Activated CD8-positive, alpha-beta memory T cell treated with anti-CD3 and anti-CD28 coated beads, Interleukin-2, amount 10 ng/mL, durations not matched to agents 7 days and 5 days (primary cell): ENCODE measurements at regions of chr12 and their contacts with region 1.

Region 1: GRCh38 chr12:122860346-122861090 is 25.3 kb downstream of the HIP1R start:
- DNase-seq: peak; percentile 87
- ATAC-seq: peak; percentile 74
- H3K4me3 Mint-ChIP-seq: no peak overlapping the region
- H3K27ac Mint-ChIP-seq: no peak overlapping the region
- H3K4me1 Mint-ChIP-seq: no peaks in the 10 kb centered on the region
- H3K27me3 Mint-ChIP-seq: no peaks in the 10 kb centered on the region

Region 2: GRCh38 chr12:122871851-122872780 is 11.6 kb after region 1 on chr12:
- CTCF ChIA-PET with region 1: interaction called, 18 read pairs
- DNase-seq: peak; percentile 80
- ATAC-seq: peak; percentile 77
- H3K4me3 Mint-ChIP-seq: peak overlapping the region; percentile 60
- H3K27ac Mint-ChIP-seq: peak overlapping the region; percentile 76
- H3K4me1 Mint-ChIP-seq: peaks cover 58% of the 10 kb centered on the region
- H3K27me3 Mint-ChIP-seq: no peaks in the 10 kb centered on the region

Region 3: DNA sequence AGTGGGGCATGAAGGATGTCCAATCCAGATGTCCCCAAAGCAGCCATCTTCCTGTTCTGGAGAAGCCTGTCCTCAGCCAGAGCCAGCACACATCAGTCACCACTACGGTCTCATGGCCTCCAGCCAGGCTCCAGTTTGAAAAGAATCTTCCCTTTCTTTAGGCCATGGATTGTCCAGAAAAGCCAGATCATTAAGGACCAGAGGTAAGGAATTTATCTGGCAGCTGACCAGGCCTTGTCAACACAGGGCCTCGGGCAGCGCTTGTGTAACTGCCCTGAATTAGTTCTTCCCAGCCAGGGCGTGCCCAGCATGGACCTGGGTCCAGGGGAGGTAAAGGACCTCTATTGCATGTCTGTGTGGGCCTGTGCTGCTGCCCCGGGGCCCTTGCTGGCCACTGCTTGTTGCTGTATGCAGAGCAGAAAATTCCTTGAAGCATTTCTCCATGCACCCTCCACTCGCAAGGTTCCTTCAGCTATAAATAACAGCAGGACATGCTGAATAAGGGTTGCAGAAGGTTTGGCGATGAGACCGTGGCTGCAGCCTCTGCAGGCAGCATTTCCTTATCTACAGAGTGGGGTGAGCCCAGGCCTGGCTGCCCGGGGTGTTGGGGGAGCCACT is 57.1 kb after region 1 on chr12:
- CTCF ChIA-PET with region 1: no interaction called
- DNase-seq: no peak
- ATAC-seq: no peak
- H3K4me3 Mint-ChIP-seq: no peak overlapping the region
- H3K27ac Mint-ChIP-seq: no peak overlapping the region
- H3K4me1 Mint-ChIP-seq: peaks cover 6% of the 10 kb centered on the region
- H3K27me3 Mint-ChIP-seq: no peaks in the 10 kb centered on the region

Region 4: GRCh38 chr12:122946690-122947341 is 86.3 kb after region 1 on chr12:
- CTCF ChIA-PET with region 1: interaction called, 111 read pairs
- DNase-seq: peak; percentile 94
- ATAC-seq: peak; percentile 90
- H3K4me3 Mint-ChIP-seq: no peak overlapping the region
- H3K27ac Mint-ChIP-seq: peak overlapping the region; percentile 74
- H3K4me1 Mint-ChIP-seq: peaks cover 41% of the 10 kb centered on the region
- H3K27me3 Mint-ChIP-seq: no peaks in the 10 kb centered on the region

Region 5: GRCh38 chr12:122951979-122952892 is 91.7 kb after region 1 on chr12:
- CTCF ChIA-PET with region 1: interaction called, 111 read pairs
- DNase-seq: peak; percentile 86
- ATAC-seq: peak; percentile 99
- H3K4me3 Mint-ChIP-seq: no peak overlapping the region
- H3K27ac Mint-ChIP-seq: peak overlapping the region; percentile 40
- H3K4me1 Mint-ChIP-seq: peaks cover 16% of the 10 kb centered on the region
- H3K27me3 Mint-ChIP-seq: no peaks in the 10 kb centered on the region